Panc1 (cell line): ENCODE measurements at regions of chr10 and their contacts with region 1.

Region 1: DNA sequence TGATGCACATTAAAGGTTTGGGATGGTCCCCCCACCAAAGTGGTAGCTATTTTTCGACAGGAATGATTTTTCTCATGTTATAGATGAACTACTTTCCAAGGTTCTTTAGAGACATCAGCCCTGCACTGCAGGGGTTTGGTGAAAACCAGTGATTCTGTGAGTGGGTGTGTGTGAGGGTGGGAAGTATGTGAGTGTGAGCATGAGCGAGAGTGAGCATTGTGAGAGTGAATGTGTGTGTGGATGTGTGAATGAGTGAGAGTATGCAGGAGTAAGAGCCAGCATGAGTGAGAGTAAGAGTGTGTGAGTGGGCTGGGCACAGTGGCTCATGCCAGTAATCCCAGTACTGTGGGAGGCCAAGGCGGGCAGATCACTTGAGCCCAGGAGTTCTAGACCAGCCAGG is 75.0 kb downstream of the GOLGA7B start:
- DNase-seq: no peak
- ATAC-seq: no peak
- H3K4me3 ChIP-seq: no peak overlapping the region
- H3K27ac ChIP-seq: no peak overlapping the region
- H3K4me1 ChIP-seq: no peaks in the 10 kb centered on the region
- H3K27me3 ChIP-seq: peaks cover 23% of the 10 kb centered on the region
- CTCF ChIP-seq: no peak

Region 2: DNA sequence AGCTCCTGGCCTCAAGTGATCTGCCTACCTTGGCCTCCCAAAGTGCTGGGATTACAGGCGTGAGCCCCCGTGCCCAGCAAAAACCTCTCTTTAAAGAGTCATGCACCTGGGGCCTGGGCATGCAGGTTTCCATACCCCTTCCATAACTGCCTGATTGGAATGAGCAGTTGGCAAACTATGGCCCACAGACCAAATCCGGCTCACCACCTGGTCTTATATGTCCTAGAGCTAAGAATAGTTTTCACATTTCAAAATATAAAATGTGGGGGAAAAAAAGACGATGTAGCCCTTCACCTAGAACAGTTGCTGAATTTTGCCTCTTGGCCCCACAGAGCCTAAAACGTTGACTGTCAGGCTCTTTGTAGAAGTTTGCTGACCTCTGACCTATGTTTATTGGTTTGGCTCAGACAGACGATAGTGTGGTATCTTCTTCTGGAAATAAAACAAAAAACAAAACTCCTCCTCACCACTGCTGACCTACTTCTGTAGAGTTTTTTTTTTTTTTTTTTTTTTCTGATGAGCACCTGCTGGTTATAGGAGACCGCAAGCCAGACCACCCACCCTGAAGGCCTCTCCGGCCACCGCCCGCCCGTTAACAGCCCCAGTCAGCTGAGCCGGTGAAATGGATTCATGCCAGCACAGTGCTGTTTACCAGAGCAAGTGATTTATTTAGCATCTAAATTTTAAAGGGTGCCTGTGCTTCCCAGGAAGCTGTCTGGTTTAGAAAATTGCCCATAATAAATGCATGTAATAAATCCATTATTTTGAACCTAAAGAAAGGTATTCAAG is 119.4 kb before region 1 on chr10:
- CTCF ChIA-PET with region 1: no interaction called
- POLR2A ChIA-PET with region 1: no interaction called
- in situ Hi-C with region 1: no loop called
- intact Hi-C with region 1: no loop called
- DNase-seq: no peak
- ATAC-seq: no peak
- H3K4me3 ChIP-seq: no peak overlapping the region
- H3K27ac ChIP-seq: no peak overlapping the region
- H3K4me1 ChIP-seq: no peaks in the 10 kb centered on the region
- H3K27me3 ChIP-seq: no peaks in the 10 kb centered on the region
- CTCF ChIP-seq: no peak

Region 3: DNA sequence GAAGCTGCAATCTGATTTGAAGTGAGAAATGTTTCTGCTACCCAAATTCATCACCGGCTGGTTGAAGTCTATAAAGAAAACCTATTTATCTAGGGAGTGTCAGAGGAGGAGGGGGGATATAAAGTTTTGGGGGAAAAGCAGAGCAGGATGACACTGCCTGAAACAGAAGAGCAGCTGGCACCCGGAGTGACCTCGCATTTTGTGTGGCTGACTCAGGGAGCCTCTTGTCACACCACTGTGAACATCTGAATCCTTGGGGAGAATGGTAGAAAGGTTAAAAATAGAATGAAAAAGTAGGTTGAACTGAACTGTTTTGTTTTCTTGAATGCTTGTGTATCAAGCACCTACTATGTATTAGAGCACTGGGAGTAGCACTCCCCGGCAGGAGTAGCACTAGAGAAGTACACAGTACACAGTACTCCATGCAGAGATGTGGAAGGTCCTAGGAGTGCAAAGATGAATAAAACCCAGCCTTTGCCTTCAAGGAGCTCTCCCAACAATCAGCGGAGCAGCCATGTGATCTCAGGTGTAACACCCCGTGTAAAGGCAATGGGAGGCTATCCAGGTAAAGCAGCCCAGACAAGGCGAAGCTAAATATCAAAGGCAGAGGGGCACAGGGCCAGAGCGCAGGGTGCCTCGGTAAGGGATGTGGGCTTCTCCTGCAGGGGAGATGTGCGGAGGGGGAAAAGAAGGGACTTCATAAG is 92.2 kb after region 1 on chr10:
- CTCF ChIA-PET with region 1: no interaction called
- POLR2A ChIA-PET with region 1: interaction called, 11 read pairs
- in situ Hi-C with region 1: no loop called
- intact Hi-C with region 1: no loop called
- DNase-seq: no peak
- ATAC-seq: 0 out of 2 replicates have a peak, but pooled peaks have one; percentile 32
- H3K4me3 ChIP-seq: no peak overlapping the region
- H3K27ac ChIP-seq: no peak overlapping the region
- H3K4me1 ChIP-seq: no peaks in the 10 kb centered on the region
- H3K27me3 ChIP-seq: peaks cover 39% of the 10 kb centered on the region
- CTCF ChIP-seq: no peak